ENCODE measurements at regions of chr6 and their contacts with region 1.

Region 1: DNA sequence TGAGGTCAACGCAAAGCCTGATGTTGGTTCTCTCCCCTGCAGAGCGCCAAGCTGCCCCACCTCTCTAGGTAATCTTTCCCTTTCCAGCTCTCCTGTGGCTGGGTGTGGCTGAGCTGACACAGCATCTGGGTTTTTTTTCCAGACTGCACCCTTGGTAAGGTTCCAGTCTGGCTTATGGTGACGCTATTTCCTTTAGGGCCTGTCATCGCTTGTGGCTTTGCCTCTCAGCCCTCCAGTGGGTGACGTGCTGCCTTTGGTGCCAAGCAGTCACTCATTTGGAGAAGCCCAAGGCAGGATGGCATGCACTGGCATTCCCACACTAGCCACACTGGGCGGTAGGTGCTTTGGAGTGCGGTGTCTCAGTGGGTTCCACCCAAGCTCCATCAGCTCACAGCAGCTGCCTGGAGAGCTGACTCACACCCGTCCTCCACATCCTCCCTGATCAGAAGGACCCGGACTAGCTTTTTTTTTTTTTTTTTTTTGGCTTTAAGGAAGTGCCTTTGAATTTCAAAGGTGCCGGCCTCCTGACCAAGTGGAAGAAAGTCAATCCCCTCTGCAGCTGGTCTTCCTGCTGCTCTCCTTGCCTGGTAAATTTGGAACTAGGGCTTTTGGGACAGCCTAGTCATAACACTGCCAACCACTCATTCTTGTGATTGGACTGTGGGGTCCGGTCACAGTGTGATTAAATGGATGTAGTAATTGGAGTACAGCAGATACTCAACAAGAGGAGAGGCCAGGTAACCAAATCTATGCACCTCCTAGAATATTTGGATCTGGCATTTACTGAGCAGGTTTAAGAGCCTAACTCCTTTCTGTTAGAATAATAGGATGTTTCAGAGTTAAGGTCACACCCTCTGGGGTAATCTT is 153.6 kb downstream of the CD83 start:
- DNase-seq: no peak
- H3K4me3 ChIP-seq: no peak overlapping the region
- H3K27ac ChIP-seq: no peak overlapping the region
- H3K4me1 ChIP-seq: peaks cover 55% of the 10 kb centered on the region
- CTCF ChIP-seq: no peak

Region 2: GRCh38 chr6:14117158-14118090 is 153.7 kb before region 1 on chr6 and contains the start of gene CD83:
- CTCF ChIA-PET with region 1: no interaction called
- POLR2A ChIA-PET with region 1: no interaction called
- intact Hi-C with region 1: no loop called
- DNase-seq: peak; percentile 89
- H3K4me3 ChIP-seq: peak within 1 kb of the TSS; percentile 95
- H3K27ac ChIP-seq: peak within 1 kb of the TSS; percentile 20
- H3K4me1 ChIP-seq: peaks cover 48% of the 10 kb centered on the region
- CTCF ChIP-seq: peak; percentile 46; the same call in 1 of the 2 replicates
- total RNA-seq, gene CD83: 26.2 and 29.7 TPM in 2 replicates

Region 3: GRCh38 chr6:14254505-14254904 is 16.7 kb before region 1 on chr6:
- CTCF ChIA-PET with region 1: interaction called, 4 read pairs
- POLR2A ChIA-PET with region 1: interaction called, 20 read pairs
- intact Hi-C with region 1: no loop called
- DNase-seq: peak; percentile 88
- H3K4me3 ChIP-seq: peak overlapping the region; percentile 25
- H3K27ac ChIP-seq: peak overlapping the region; percentile 73
- H3K4me1 ChIP-seq: peaks cover 63% of the 10 kb centered on the region
- CTCF ChIP-seq: no peak

Region 4: GRCh38 chr6:14674458-14674857 is 403.3 kb after region 1 on chr6:
- CTCF ChIA-PET with region 1: interaction called, 10 read pairs
- POLR2A ChIA-PET with region 1: interaction called, 4 read pairs
- intact Hi-C with region 1: no loop called
- DNase-seq: peak; percentile 80
- H3K4me3 ChIP-seq: no peak overlapping the region
- H3K27ac ChIP-seq: peak overlapping the region; percentile 37
- H3K4me1 ChIP-seq: peaks cover 53% of the 10 kb centered on the region
- CTCF ChIP-seq: no peak

Region 5: GRCh38 chr6:14816116-14816859 is 545.1 kb after region 1 on chr6:
- CTCF ChIA-PET with region 1: no interaction called
- POLR2A ChIA-PET with region 1: no interaction called
- intact Hi-C with region 1: no loop called
- DNase-seq: no peak
- H3K4me3 ChIP-seq: no peak overlapping the region
- H3K27ac ChIP-seq: no peak overlapping the region
- H3K4me1 ChIP-seq: no peaks in the 10 kb centered on the region
- CTCF ChIP-seq: no peak

Region 6: GRCh38 chr6:14910692-14911547 is 639.8 kb after region 1 on chr6:
- CTCF ChIA-PET with region 1: no interaction called
- POLR2A ChIA-PET with region 1: no interaction called
- intact Hi-C with region 1: no loop called
- DNase-seq: peak; percentile 85
- H3K4me3 ChIP-seq: peak overlapping the region; percentile 46
- H3K27ac ChIP-seq: peak overlapping the region; percentile 27
- H3K4me1 ChIP-seq: peaks cover 26% of the 10 kb centered on the region
- CTCF ChIP-seq: no peak

Measured in OCI-LY7 (cell line).